ENCODE measurements at regions of chr18 and their contacts with region 1.

Region 1: DNA sequence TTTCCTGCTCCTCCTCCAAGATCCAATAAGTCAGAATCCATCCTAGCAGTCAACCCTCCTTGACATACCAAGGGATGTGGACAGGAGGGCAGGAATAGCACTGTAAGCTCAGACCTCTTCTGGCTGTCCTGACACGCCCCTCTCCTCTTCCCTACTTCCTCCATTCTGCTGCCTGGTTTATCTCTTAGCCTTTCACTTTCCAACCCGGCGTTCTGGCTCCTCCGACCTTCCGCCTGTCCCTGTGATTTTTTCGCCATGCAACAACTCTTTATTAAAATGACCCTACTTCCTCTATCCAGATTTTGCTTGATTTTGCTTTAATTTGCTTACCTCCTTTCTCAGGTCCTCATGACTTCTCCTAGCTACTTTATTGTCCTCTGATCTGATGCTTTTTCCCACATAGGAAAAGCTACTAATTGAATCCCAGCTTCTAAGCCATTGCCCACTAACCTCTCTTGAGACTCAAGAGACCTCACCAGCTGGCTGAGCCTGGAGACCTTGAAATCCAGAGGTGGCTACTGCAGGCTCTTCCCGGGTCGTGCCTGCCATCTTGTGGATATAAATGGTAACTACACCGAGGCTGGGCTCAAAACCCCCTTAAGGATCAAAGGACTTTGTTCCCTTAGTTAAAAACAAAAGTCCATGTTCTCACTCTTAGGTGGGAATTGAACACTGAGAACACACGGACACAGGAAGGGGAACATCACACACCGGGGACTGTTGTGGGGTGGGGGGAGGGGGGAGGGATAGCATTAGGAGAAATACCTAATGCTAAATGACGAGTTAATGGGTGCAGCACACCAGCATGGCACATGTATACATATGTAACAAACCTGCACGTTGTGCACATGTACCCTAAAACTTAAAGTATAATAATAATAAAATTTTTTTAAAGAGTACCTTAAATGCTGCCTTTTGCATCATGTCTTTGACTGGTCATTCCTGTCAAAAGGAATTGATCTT is 139.4 kb downstream of the AKAIN1 start:
- DNase-seq: peak; percentile 22 to 70
- ATAC-seq: peak in 2 of 3 donors; percentile 64 to 65
- H3K4me3 ChIP-seq: no peak overlapping the region
- H3K4me3 Mint-ChIP-seq: peak overlapping the region; percentile 18
- H3K27ac ChIP-seq: no peak overlapping the region
- H3K27ac Mint-ChIP-seq: peak overlapping the region in 1 of 2 donors; percentile 61
- H3K4me1 ChIP-seq: peaks cover 10% of the 10 kb centered on the region
- H3K4me1 Mint-ChIP-seq: peaks cover 21% of the 10 kb centered on the region in 2 donors
- H3K27me3 ChIP-seq: no peaks in the 10 kb centered on the region
- H3K27me3 Mint-ChIP-seq: peaks cover 0 to 4% of the 10 kb centered on the region in 2 donors
- CTCF ChIP-seq: peak; percentile 68

Region 2: GRCh38 chr18:4106407-4107033 is 951.1 kb before region 1 on chr18:
- intact Hi-C with region 1: loop called (anchors 5 kb)
- DNase-seq: peak in 1 of 2 donors; percentile 65
- ATAC-seq: peak in 1 of 3 donors; percentile 55
- H3K4me3 ChIP-seq: no peak overlapping the region
- H3K4me3 Mint-ChIP-seq: no peak overlapping the region
- H3K27ac ChIP-seq: no peak overlapping the region
- H3K27ac Mint-ChIP-seq: no peak overlapping the region
- H3K4me1 ChIP-seq: no peaks in the 10 kb centered on the region
- H3K4me1 Mint-ChIP-seq: no peaks in the 10 kb centered on the region
- H3K27me3 ChIP-seq: no peaks in the 10 kb centered on the region
- H3K27me3 Mint-ChIP-seq: no peaks in the 10 kb centered on the region
- CTCF ChIP-seq: peak; percentile 55

Region 3: GRCh38 chr18:5476961-5477723 is 419.5 kb after region 1 on chr18:
- intact Hi-C with region 1: no loop called
- DNase-seq: no peak
- ATAC-seq: no peak
- H3K4me3 ChIP-seq: no peak overlapping the region
- H3K4me3 Mint-ChIP-seq: no peak overlapping the region
- H3K27ac ChIP-seq: no peak overlapping the region
- H3K27ac Mint-ChIP-seq: no peak overlapping the region
- H3K4me1 ChIP-seq: no peaks in the 10 kb centered on the region
- H3K4me1 Mint-ChIP-seq: peaks cover 0 to 4% of the 10 kb centered on the region in 2 donors
- H3K27me3 ChIP-seq: no peaks in the 10 kb centered on the region
- H3K27me3 Mint-ChIP-seq: peaks cover 4 to 10% of the 10 kb centered on the region in 2 donors
- CTCF ChIP-seq: no peak